Cardiac septum (tissue), 1 donor: ENCODE measurements at regions of chr20 and their contacts with region 1.

Region 1: GRCh38 chr20:44601801-44602204 is 19.4 kb downstream of the PKIG start:
- DNase-seq: peak; percentile 86

Region 2: GRCh38 chr20:44460795-44461141 is 141.0 kb before region 1 on chr20:
- intact Hi-C with region 1: no loop called
- DNase-seq: no peak

Region 3: GRCh38 chr20:44540834-44541233 is 61.0 kb before region 1 on chr20:
- intact Hi-C with region 1: loop called (anchors 5 kb)
- DNase-seq: no peak

Region 4: DNA sequence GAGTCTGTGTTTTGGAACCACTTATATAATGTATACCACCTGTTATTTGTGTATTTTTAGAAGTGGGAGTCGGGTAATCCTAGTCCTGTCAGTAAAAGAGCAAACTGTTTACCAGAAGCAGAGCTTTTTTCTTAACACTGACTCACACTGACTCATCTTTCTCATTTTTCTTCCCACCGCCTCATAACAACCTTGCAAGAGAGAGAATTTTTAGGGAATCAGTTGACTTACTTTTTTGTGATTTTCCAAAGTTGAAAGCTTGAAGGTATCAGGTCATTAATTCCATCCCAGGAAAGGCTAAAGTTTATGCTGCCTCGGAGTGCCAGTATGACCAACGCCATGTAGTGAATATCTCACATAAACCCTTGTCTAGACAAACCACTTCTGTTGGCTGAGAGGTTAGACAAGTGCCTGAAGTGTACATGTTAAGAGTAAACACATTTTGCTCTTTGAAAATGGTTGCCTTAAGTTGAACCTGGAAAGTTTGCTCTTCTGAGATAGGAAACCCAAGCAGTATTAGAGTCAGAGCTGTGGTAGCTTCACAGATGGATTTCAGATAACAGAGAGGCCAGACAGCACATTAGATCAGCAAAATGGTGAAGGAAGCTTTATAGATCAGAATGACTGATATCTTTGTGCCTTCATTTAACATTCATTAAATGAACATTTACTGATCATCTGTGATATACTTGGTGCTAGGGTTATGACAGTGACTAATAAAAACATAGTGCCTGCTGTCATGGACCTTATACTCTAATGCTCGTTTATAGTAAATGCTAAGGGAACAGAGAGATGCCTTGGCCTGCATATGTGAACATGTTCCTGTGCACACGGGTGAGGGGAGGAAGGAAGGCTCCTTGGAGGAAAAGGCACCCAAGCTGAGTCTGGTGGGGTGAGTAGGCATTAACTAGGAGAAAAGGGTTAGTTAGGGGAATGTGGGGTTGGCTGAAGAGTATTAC is 48.6 kb before region 1 on chr20:
- intact Hi-C with region 1: no loop called
- DNase-seq: no peak

Region 5: DNA sequence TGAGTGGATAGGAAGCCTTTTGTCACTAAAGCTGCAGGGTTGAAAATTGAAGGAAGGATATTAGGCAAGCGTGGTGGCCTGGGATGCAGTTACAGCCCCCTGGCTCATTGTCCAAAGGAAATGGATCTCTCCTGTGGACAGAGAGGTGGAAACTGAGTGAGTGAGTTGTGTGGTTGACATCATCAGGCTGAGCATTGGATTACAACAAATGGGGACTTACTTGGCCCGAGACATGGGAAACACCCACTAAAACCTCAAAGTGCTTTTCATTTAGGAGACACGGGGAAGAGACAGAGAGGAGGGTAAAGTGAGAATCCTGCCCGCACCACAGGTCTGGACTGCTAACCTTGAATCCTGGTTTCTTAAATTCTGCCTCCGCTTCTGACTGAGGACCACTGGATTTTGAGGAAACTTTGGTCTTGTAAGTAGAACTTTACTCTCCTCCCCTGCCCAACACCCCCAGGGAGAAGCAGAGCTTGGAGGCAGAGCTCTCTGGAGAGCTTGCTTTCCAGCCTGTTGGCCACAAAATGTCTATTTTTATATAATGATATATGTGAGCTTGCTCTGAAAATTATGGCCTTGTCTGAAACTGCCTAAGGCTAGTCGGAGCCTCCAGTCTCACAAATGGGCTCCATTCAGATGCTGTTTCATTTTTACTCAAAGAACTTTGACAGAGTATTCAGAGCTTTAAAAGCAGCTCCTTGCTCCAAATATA is 19.3 kb before region 1 on chr20 and contains the start of gene PKIG:
- intact Hi-C with region 1: loop called (anchors 1 kb)
- DNase-seq: no peak
- total RNA-seq, gene PKIG: 274 TPM